A673 (cell line): ENCODE measurements at regions of chr1 and their contacts with region 1.

Region 1: DNA sequence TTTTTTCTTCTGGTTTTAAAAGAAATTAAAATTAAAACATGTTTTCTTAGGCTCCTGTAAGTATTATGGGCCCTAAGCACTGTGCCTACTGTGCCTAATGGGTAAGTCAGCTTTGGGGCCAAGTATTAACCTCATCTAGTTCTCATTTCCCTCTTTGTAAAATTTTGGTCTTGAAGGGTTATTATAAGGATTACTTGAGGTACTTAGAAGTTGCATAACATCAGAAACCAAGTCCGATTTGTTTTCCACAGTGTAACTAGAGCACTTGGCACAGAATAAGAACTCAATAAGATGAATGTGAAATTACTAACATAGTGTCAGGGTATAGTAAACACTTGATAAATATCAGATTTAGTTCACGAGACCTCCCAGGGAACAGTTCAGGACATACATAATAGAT is 16.4 kb upstream of the OSBPL9 start:
- DNase-seq: no peak
- H3K4me3 ChIP-seq: no peak overlapping the region
- H3K27ac ChIP-seq: no peak overlapping the region
- H3K4me1 ChIP-seq: no peaks in the 10 kb centered on the region
- H3K27me3 ChIP-seq: no peaks in the 10 kb centered on the region
- CTCF ChIP-seq: no peak

Region 2: DNA sequence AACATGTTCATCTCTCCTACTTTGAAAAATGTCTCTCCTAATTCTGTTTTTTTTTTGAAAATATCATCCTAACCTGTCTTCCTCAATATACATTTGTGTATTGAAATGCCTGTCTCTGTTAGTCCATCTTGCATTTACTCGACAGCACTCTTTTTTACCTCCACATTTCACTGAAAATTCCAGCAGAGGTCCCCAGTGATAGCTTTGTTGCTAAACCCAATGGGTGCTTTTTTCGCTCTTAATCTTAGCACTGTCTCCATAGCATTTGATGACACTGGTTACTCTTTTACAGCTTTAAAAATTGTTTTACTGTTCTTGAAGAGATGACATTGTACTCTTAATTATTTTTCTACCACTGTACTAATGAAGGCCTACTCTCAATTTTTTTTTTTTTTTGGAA is 27.1 kb after region 1 on chr1:
- CTCF ChIA-PET with region 1: no interaction called
- POLR2A ChIA-PET with region 1: interaction called, 18 read pairs
- intact Hi-C with region 1: no loop called
- DNase-seq: peak; percentile 79
- H3K4me3 ChIP-seq: no peak overlapping the region
- H3K27ac ChIP-seq: no peak overlapping the region
- H3K4me1 ChIP-seq: peaks cover 12% of the 10 kb centered on the region
- H3K27me3 ChIP-seq: no peaks in the 10 kb centered on the region
- CTCF ChIP-seq: peak; percentile 72